ENCODE measurements at regions of chr3 and their contacts with region 1.

Region 1: GRCh38 chr3:33131331-33132018 is 17.7 kb downstream of the CRTAP start:
- DNase-seq: no peak

Region 2: GRCh38 chr3:33184863-33185262 is 53.4 kb after region 1 on chr3:
- intact Hi-C with region 1: no loop called
- DNase-seq: no peak

Region 3: DNA sequence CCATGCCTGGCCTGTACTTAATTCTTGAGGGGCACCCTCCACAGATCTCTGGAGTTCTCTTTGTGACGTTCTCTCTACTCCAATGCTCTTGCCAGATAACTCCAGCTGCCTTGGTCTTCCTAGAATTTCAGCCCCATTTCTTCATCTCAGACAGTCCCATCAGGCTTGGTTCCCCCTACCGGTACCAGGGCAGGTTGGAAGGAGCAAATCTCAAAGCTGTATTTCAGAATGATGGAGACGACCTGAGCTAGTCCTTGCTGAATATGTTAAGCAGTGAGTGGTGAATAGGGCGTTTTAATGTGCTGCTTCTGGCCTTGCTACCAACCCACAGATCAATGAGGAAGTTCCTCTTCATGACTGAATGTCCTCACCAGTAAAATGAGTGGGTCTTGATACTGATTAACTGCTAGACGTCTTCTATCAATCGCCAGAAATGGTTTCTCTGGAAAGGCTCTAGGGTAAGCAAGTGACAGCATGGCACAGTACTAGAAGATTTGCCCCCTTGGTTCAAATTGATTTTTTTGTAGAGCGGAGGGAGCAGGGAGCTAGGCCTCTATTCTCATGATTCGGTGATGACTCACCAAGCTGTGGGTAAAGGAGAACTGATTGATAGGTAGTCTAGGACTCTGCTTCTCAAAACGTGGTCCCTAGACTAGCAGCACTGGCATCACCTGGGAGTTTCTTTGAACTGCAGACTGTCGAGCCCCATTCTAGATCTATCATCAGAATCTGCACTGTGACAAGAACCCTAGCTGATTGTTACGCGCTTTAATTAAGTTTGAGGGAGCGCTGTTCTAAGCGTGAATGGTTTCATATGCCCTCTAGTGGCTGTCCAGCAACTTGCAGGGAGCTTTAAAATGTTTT is 241.0 kb after region 1 on chr3:
- intact Hi-C with region 1: loop called (anchors 5 kb)
- DNase-seq: no peak

Region 4: DNA sequence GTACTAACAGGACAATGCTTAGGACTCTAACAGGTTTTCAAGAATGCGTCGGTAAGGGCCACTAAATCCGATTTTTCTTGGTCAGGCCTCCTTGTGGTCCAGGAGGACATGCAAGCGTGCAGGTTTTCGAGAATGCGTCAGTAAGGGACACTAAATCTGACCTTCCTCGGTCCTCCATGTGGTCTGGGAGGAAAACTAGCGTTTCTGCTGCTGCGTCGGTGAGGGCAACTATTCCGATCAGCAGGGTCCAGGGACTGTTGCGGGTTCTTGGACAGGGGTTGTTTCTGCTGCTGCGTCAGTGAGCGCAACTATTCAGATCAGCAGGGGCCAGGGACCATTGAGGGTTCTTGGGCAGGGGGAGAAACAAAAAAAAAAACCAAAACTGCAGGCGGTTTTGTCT is 316.5 kb after region 1 on chr3:
- intact Hi-C with region 1: no loop called
- DNase-seq: no peak